Activated naive CD4-positive, alpha-beta T cell treated with anti-CD3 and anti-CD28 coated beads for 36 hours (primary cell): ENCODE measurements at regions of chr14 and their contacts with region 1.

Region 1: DNA sequence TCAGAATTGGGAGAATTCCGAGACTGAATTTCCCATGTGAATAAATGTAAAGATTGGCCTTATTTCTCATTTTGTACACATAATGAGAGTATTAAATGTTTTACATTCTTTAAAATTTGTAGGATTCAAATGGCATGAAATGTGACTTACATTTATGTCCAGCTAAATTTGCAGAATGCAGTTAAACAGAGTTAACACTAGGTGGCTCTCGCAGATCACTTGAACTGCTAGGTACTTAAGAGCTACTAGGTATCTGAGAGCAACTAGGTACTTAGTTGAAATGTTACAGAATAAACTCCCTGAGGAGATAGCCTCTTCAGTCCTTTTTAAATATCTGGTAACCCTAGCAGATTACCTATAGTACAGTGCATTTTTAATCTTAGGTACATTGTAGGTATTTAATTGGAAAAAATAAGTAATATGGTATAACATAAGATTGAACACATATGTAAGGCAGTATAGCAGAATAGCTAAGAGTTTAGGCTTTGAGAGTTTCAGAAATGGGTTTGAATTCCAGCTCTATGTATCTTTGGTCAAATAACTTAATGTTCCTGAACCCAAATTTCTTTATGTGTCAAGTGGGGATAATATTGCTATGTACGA is 73.8 kb downstream of the KIAA0586 start:
- DNase-seq: peak; percentile 52
- H3K4me3 Mint-ChIP-seq: no peak overlapping the region
- H3K27ac Mint-ChIP-seq: no peak overlapping the region
- H3K4me1 Mint-ChIP-seq: no peaks in the 10 kb centered on the region
- H3K27me3 Mint-ChIP-seq: no peaks in the 10 kb centered on the region

Region 2: GRCh38 chr14:58414845-58415244 is 86.5 kb before region 1 on chr14:
- CTCF ChIA-PET with region 1: no interaction called
- intact Hi-C with region 1: no loop called
- DNase-seq: no peak
- H3K4me3 Mint-ChIP-seq: no peak overlapping the region
- H3K27ac Mint-ChIP-seq: no peak overlapping the region
- H3K4me1 Mint-ChIP-seq: peaks cover 25% of the 10 kb centered on the region
- H3K27me3 Mint-ChIP-seq: no peaks in the 10 kb centered on the region

Region 3: DNA sequence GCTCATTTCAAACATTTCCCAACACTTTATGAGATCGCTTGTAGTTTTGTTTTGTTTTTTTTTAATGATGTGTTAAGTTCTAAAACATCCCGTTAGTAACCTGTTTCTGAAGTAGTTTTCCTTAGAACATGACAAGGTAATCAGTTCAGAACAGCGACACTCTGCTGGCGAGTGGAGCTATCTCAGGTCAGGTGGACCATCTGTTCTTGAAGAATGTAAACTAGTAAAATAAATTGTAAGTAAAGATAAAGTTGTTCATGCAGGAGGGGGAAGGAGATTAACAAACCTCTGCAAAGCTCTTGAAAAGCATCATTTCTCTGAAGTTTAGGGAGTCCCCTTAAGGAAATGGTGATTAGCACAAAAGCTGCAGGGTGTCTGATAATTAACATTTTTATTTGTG is 64.5 kb after region 1 on chr14:
- CTCF ChIA-PET with region 1: interaction called, 10 read pairs
- intact Hi-C with region 1: no loop called
- DNase-seq: no peak
- H3K4me3 Mint-ChIP-seq: no peak overlapping the region
- H3K27ac Mint-ChIP-seq: no peak overlapping the region
- H3K4me1 Mint-ChIP-seq: peaks cover 21% of the 10 kb centered on the region
- H3K27me3 Mint-ChIP-seq: no peaks in the 10 kb centered on the region

Region 4: GRCh38 chr14:58882577-58883018 is 381.3 kb after region 1 on chr14:
- CTCF ChIA-PET with region 1: no interaction called
- intact Hi-C with region 1: loop called (anchors 5 kb)
- DNase-seq: no peak
- H3K4me3 Mint-ChIP-seq: no peak overlapping the region
- H3K27ac Mint-ChIP-seq: no peak overlapping the region
- H3K4me1 Mint-ChIP-seq: no peaks in the 10 kb centered on the region
- H3K27me3 Mint-ChIP-seq: peaks cover 3% of the 10 kb centered on the region

Region 5: GRCh38 chr14:59055439-59056045 is 554.2 kb after region 1 on chr14:
- CTCF ChIA-PET with region 1: interaction called, 8 read pairs
- intact Hi-C with region 1: loop called (anchors 1 kb)
- DNase-seq: peak; percentile 54
- H3K4me3 Mint-ChIP-seq: no peak overlapping the region
- H3K27ac Mint-ChIP-seq: no peak overlapping the region
- H3K4me1 Mint-ChIP-seq: no peaks in the 10 kb centered on the region
- H3K27me3 Mint-ChIP-seq: peaks cover 4% of the 10 kb centered on the region

Region 6: DNA sequence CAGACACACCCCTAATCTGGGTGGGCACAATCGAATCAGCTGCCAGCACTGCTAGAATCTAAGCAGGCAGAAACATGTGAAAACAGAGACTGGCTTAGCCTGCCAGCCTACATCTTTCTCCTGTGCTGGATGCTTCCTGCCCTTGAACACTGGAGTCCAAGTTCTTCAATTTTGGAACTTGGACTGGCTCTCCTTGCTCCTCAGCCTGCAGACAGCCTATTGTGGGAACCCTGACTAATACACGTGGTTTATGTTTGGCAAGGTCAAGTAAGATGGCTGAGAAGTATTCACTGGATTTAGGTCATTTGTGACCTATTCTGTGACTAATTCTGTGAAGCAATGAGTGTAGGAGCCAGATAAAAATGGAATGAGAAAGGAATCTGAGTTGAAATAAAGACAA is 952.8 kb after region 1 on chr14:
- CTCF ChIA-PET with region 1: no interaction called
- intact Hi-C with region 1: loop called (anchors 10 kb)
- DNase-seq: no peak
- H3K4me3 Mint-ChIP-seq: no peak overlapping the region
- H3K27ac Mint-ChIP-seq: no peak overlapping the region
- H3K4me1 Mint-ChIP-seq: no peaks in the 10 kb centered on the region
- H3K27me3 Mint-ChIP-seq: no peaks in the 10 kb centered on the region